Naive thymus-derived CD4-positive, alpha-beta T cell (primary cell): ENCODE measurements at regions of chr7 and their contacts with region 1.

Region 1: GRCh38 chr7:44797329-44798251 is 1.1 kb downstream of the PPIA start:
- DNase-seq: peak; percentile 65 to 86 (median 80)
- ATAC-seq: peak; percentile 67
- H3K4me3 ChIP-seq: peak overlapping the region; percentile 87
- H3K4me3 Mint-ChIP-seq: peak overlapping the region; percentile 87 to 99 (median 98)
- H3K27ac ChIP-seq: peak overlapping the region; percentile 98
- H3K27ac Mint-ChIP-seq: peak overlapping the region; percentile 90 to 99 (median 97)
- H3K4me1 ChIP-seq: peaks cover 12 to 21% of the 10 kb centered on the region in 2 donors
- H3K4me1 Mint-ChIP-seq: peaks cover 8 to 41% (median 38%) of the 10 kb centered on the region in 7 donors
- H3K27me3 ChIP-seq: no peaks in the 10 kb centered on the region
- H3K27me3 Mint-ChIP-seq: no peaks in the 10 kb centered on the region

Region 2: GRCh38 chr7:44082541-44083207 is 714.9 kb before region 1 on chr7:
- CTCF ChIA-PET with region 1: no interaction called
- POLR2A ChIA-PET with region 1: no interaction called
- intact Hi-C with region 1: loop called (anchors 1 to 5 kb)
- DNase-seq: peak; percentile 88 to 99 (median 98)
- ATAC-seq: peak; percentile 96
- H3K4me3 ChIP-seq: peak overlapping the region; percentile 59
- H3K4me3 Mint-ChIP-seq: peak overlapping the region; percentile 79 to 91 (median 87)
- H3K27ac ChIP-seq: peak overlapping the region; percentile 92
- H3K27ac Mint-ChIP-seq: peak overlapping the region; percentile 44 to 95 (median 80)
- H3K4me1 ChIP-seq: peaks cover 15 to 16% of the 10 kb centered on the region in 2 donors
- H3K4me1 Mint-ChIP-seq: peaks cover 11 to 30% (median 18%) of the 10 kb centered on the region in 7 donors
- H3K27me3 ChIP-seq: no peaks in the 10 kb centered on the region
- H3K27me3 Mint-ChIP-seq: peaks cover 0 to 4% (median 0%) of the 10 kb centered on the region in 5 donors

Region 3: DNA sequence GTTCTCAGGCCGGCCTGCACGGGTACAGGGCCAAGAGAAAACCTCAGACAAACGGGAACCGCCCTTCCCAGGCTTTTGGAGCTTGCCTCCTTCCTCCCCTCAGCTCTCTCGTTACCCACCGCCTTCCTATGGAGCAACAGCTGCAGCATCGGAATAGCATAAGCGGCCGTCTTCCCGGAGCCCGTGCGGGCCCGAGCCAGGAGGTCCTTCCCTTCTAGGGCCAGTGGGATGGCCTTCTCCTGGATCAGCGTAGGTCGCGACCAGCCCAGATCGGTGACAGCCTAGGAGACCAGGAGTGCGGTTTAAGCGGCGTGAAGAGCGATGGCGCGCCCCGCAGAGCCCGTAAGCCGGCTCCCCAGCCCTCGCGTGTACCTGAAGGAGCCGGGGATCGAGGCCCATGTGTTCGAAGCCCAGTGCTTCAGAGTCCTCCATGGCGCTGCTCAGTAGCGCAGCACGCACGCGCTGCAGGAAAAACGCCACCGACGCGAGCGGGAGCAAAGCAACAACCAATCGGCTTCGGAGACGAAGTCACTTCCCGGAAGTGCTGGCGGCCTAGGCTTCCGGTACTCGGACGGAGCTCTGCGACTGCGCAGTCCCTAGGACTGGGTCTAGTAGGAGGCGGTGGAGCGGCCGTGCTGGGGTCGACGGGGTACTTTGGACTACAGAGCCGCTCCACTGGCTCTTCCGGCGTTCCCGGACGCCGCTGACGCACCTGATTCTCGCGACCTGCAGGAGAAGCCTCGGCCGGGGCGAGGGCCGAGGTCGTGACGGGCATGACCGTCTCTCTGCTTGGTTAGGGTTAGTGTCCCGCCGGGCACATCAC is 223.9 kb before region 1 on chr7 and contains the start of gene DDX56:
- CTCF ChIA-PET with region 1: no interaction called
- POLR2A ChIA-PET with region 1: interaction called, 5 read pairs
- intact Hi-C with region 1: loop called (anchors 1 to 2 kb)
- DNase-seq: peak; percentile 72 to 90 (median 87)
- ATAC-seq: peak; percentile 97
- H3K4me3 ChIP-seq: peak within 1 kb of the TSS; percentile 95
- H3K4me3 Mint-ChIP-seq: peak within 1 kb of the TSS; percentile 91 to 98 (median 95)
- H3K27ac ChIP-seq: peak within 1 kb of the TSS; percentile 95
- H3K27ac Mint-ChIP-seq: peak within 1 kb of the TSS; percentile 92 to 99 (median 98)
- H3K4me1 ChIP-seq: peaks cover 19 to 27% of the 10 kb centered on the region in 2 donors
- H3K4me1 Mint-ChIP-seq: peaks cover 20 to 48% (median 33%) of the 10 kb centered on the region in 7 donors
- H3K27me3 ChIP-seq: no peaks in the 10 kb centered on the region
- H3K27me3 Mint-ChIP-seq: no peaks in the 10 kb centered on the region
- total RNA-seq, gene DDX56: 82.8 to 124 (median 100.0) TPM

Region 4: DNA sequence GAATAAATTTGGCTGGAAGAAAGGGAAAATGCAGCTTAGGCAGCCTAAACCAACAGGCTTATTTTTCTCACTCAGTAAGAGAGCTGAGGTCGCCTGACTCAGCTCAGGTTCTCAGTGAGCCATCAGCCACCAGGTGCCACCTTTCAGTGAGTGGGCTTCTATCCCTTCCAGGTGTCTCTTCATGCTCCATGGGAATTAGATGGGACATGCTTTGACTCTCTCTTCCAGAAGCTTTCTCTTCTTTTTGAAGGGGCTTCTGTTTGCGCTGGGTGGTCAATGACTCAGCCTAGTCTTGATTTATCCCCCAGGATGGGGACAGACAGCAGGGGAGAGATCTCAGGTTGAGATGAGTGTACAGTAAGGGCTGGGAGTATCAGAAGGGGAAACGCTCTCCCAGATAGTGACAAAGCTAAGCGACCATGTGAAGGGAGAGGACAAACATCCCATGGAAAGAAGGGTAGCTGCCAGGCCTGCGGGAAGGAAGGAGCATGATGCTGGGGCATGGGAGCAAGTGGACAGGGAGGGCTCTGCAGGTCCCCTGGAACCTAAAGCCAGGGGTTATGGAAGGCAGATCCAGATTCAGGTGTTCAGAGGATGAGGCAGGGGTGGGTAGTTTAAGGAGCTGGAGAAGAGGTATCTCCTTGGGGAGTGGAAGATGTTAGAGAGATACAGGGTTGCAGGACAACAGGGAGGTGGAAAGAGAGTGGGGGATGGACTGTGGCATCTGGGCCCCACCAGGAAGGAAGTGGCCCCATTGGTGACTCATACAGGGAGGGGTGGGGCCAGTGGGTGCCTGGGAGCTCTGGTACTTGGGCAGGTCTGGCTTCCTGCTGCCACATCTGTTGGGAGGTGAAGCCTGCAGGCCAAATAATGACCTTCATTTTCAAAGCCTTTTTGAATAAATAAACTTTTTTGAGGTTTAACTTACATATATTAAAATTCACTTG is 158.7 kb before region 1 on chr7:
- CTCF ChIA-PET with region 1: no interaction called
- POLR2A ChIA-PET with region 1: interaction called, 3 read pairs
- intact Hi-C with region 1: loop called (anchors 1 kb)
- DNase-seq: peak; percentile 15 to 81 (median 40)
- ATAC-seq: peak; percentile 83
- H3K4me3 ChIP-seq: peak overlapping the region; percentile 28
- H3K4me3 Mint-ChIP-seq: peak overlapping the region; percentile 57 to 95 (median 78)
- H3K27ac ChIP-seq: peak overlapping the region; percentile 79
- H3K27ac Mint-ChIP-seq: peak overlapping the region; percentile 92 to 100 (median 98)
- H3K4me1 ChIP-seq: peaks cover 37 to 77% of the 10 kb centered on the region in 2 donors
- H3K4me1 Mint-ChIP-seq: peaks cover 46 to 80% (median 57%) of the 10 kb centered on the region in 7 donors
- H3K27me3 ChIP-seq: no peaks in the 10 kb centered on the region
- H3K27me3 Mint-ChIP-seq: no peaks in the 10 kb centered on the region

Region 5: GRCh38 chr7:44885394-44886317 is 88.1 kb after region 1 on chr7 and contains the start of gene PURB:
- CTCF ChIA-PET with region 1: no interaction called
- POLR2A ChIA-PET with region 1: interaction called, 7 read pairs
- intact Hi-C with region 1: loop called (anchors 1 kb)
- DNase-seq: peak; percentile 97 to 99 (median 97)
- ATAC-seq: peak; percentile 92
- H3K4me3 ChIP-seq: peak within 1 kb of the TSS; percentile 88
- H3K4me3 Mint-ChIP-seq: peak within 1 kb of the TSS; percentile 92 to 97 (median 93)
- H3K27ac ChIP-seq: peak within 1 kb of the TSS; percentile 99
- H3K27ac Mint-ChIP-seq: peak within 1 kb of the TSS; percentile 98 to 100 (median 99)
- H3K4me1 ChIP-seq: peaks cover 26 to 50% of the 10 kb centered on the region in 2 donors
- H3K4me1 Mint-ChIP-seq: peaks cover 7 to 61% (median 46%) of the 10 kb centered on the region in 7 donors
- H3K27me3 ChIP-seq: no peaks in the 10 kb centered on the region
- H3K27me3 Mint-ChIP-seq: peaks cover 0 to 2% (median 0%) of the 10 kb centered on the region in 5 donors
- total RNA-seq, gene PURB: 16.5 to 30.5 (median 23.3) TPM

Region 6: DNA sequence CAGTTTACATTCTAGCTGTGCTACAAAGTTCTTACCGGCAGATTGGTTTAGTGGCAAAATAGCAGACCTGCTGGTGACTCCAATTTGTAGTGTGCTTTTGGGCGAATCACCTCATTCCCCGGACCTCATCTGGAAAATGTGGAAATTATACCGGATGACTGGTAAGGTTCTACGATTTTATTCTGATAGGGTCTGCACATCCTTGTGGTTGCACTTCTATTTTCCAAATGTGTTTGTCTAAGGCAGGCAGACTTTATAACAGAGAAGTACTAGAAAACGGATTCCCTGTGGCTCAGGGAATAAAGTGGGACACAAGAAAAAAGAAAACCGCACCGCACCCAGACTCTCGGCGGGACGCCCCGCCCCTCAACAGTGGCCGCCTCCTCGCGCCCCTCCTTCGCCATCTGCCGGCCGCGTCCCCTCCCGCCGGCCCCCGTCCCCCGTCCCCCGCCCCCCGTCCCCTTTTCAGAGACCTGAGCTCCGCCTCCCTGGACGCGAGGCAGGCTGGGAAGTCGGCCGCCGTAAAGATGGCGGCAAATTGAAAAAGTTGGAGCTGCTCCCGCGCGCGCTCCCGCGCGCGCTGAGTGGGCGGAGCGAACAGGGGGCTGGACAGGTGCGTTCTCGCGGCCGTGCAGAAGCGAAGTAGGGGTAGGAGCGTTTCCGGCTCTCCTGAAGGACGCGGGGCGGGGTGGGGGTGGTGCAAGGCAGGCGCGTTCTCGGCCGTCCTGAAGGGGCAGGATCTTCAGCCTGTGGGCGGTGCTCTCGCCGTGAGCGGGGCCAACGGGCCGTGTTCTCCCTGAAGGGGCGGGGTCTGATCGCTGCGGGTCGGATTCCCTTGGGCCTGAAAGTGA is 201.9 kb after region 1 on chr7:
- CTCF ChIA-PET with region 1: no interaction called
- POLR2A ChIA-PET with region 1: no interaction called
- intact Hi-C with region 1: loop called (anchors 1 to 2 kb)
- DNase-seq: peak; percentile 92 to 99 (median 98)
- ATAC-seq: peak; percentile 93
- H3K4me3 ChIP-seq: peak overlapping the region; percentile 83
- H3K4me3 Mint-ChIP-seq: peak overlapping the region; percentile 85 to 100 (median 96)
- H3K27ac ChIP-seq: peak overlapping the region; percentile 80
- H3K27ac Mint-ChIP-seq: peak overlapping the region; percentile 82 to 99 (median 96)
- H3K4me1 ChIP-seq: peaks cover 18 to 34% of the 10 kb centered on the region in 2 donors
- H3K4me1 Mint-ChIP-seq: peaks cover 19 to 59% (median 49%) of the 10 kb centered on the region in 7 donors
- H3K27me3 ChIP-seq: no peaks in the 10 kb centered on the region
- H3K27me3 Mint-ChIP-seq: no peaks in the 10 kb centered on the region